Head of caudate nucleus (tissue), 42 donors: ENCODE measurements at regions of chr3 and their contacts with region 1.

Region 1: DNA sequence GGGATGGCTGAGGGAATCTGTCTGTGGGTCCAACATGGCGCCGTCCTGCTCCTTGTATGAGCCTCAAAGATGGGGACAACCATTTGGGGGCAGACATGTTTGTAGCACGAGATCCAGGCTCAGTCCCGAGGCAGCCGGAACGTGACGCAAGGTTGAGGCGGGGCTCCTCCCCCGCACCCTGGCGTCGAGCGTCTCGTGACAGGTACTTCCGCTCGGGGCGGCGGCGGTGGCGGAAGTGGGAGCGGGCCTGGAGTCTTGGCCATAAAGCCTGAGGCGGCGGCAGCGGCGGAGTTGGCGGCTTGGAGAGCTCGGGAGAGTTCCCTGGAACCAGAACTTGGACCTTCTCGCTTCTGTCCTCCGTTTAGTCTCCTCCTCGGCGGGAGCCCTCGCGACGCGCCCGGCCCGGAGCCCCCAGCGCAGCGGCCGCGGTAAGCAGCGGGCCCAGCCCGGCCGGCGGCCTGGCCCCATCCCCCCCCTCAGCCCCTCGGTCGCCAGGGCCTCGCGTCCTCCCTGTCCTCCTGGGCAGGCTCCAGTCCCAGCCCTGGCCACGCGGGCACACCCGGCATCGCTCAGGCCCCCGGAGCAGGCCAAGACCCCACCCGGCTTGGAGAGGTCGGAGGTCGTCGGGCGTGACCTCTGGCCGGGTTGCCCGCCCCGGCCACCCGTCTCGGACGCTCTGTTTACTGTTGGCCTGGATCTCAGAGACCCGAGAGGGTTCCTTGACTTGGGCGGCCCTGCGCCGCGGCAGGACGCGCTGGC is at the start of gene RAB7A:
- DNase-seq: peak; percentile 95 to 99 (median 98)

Region 2: GRCh38 chr3:128794770-128795649 is 68.9 kb after region 1 on chr3:
- intact Hi-C with region 1: loop called (anchors 5 kb)
- DNase-seq: peak in 38 of 42 donors; percentile 16 to 85 (median 58)

Region 3: DNA sequence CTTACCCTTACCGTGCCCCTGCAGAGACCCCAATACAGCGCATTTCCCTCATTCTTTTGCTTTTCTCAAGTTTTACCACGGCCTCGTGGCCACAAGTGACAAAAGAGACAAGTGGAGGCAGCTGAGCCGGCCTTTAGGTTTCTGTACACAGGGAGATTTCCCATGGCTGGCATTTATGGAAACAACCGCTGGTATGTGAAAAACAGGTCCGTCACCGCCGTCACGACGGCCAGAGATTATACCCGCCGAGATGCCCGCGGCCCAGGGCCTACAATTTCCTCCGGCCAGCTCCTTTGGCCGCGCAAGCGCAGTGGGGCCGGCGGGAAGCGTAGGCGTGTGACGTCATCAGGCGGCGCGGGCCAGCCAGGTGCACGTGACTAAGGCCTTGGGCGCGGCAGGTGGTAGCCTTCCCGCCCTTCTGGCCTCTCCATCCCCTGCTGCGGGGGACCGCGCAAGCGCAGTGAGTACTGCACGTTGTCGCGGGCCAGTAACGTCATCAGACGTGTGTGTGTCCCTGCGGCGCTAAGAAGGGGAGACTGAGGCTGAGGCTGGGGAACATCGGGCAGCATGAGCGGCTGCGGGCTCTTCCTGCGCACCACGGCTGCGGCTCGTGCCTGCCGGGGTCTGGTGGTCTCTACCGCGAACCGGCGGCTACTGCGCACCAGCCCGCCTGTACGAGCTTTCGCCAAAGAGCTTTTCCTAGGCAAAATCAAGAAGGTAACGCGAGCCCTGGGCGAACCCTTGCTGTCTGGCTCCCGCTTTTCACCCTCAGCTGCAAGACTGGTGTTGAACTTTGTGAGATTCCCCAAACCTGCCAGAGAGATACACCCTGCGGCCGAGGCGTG is 153.2 kb after region 1 on chr3 and contains the start of gene ACAD9:
- intact Hi-C with region 1: loop called (anchors 2 kb)
- DNase-seq: peak; percentile 90 to 99 (median 97)

Region 4: DNA sequence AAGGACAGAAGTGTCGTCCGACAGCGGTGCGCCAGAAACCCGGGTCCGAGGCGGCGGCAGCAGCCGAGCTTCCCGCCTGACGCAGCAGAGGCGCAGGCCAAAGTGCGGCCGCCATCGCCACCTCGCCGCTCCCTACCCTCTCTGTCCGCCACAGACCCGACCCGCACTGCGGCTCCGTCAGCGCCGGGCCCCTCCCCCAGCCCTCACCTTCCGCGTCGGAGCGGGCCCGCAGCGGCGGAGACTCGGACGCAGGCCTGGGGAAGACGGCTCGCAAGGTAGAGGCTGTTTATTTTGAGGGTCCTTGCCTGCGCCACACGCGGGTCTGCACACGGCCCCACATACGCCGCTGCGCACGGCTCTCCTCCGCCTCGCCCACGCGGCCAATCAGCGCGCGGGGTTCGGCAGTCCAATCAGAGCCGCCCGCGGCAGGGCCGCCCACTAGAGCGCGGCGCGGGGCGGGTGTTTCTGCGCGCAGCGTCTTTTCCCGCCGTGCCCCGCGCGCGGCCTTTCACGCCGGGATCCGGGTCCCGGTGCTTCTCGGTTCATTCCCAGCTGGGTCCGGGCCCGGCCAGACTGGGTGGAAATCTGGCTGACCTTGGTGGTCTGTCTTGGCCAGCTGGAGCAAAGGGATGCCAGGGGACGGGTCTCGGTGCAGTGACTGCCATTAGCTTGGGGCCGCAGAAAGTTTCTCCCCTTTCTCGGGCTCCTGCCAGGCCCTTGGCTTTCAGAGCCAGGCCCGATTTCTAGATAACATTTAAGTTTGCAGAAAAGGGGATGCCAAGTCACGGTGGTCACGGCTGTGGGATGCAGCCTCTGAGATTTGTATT is 457.7 kb after region 1 on chr3 and contains the start of gene CNBP:
- intact Hi-C with region 1: no loop called
- DNase-seq: peak; percentile 76 to 98 (median 95)